B cell (primary cell): ENCODE measurements at regions of chr4 and their contacts with region 1.

Region 1: GRCh38 chr4:100093091-100093866 is 97.0 kb downstream of the DDIT4L start:
- DNase-seq: peak; percentile 93
- ATAC-seq: peak; percentile 99
- H3K4me3 ChIP-seq: no peak overlapping the region
- H3K4me3 Mint-ChIP-seq: peak overlapping the region; percentile 48
- H3K27ac ChIP-seq: no peak overlapping the region
- H3K27ac Mint-ChIP-seq: peak overlapping the region; percentile 57
- H3K4me1 ChIP-seq: peaks cover 7 to 12% of the 10 kb centered on the region in 2 donors
- H3K4me1 Mint-ChIP-seq: peaks cover 26% of the 10 kb centered on the region
- H3K27me3 ChIP-seq: no peaks in the 10 kb centered on the region
- H3K27me3 Mint-ChIP-seq: peaks cover 5% of the 10 kb centered on the region
- CTCF ChIP-seq: peak; percentile 84

Region 2: DNA sequence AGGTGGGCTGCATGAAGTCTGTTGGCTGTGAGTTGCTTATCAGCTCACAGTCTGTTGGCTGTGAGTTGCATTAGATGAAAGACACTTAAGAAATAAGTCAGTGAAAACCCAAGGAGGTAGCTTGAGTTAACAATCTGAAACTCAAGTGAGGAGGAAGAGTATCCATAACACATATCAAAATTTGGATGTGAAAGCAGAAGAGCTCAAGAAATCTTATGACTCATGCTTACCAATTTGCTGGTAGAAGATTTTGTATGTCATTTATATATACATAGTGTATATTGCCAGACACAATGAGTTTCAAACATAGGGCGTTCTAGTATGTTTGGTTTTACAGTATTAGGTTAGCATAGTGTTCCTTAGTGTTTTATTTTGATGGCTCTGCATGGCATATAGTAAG is 10.4 kb before region 1 on chr4:
- CTCF ChIA-PET with region 1: interaction called, 15 read pairs
- POLR2A ChIA-PET with region 1: no interaction called
- intact Hi-C with region 1: no loop called
- DNase-seq: no peak
- ATAC-seq: no peak
- H3K4me3 ChIP-seq: no peak overlapping the region
- H3K4me3 Mint-ChIP-seq: no peak overlapping the region
- H3K27ac ChIP-seq: no peak overlapping the region
- H3K27ac Mint-ChIP-seq: no peak overlapping the region
- H3K4me1 ChIP-seq: no peaks in the 10 kb centered on the region
- H3K4me1 Mint-ChIP-seq: no peaks in the 10 kb centered on the region
- H3K27me3 ChIP-seq: peaks cover 0 to 3% (median 0%) of the 10 kb centered on the region in 4 experiments
- H3K27me3 Mint-ChIP-seq: no peaks in the 10 kb centered on the region
- CTCF ChIP-seq: no peak

Region 3: GRCh38 chr4:100421361-100421978 is 328.2 kb after region 1 on chr4:
- CTCF ChIA-PET with region 1: no interaction called
- POLR2A ChIA-PET with region 1: no interaction called
- intact Hi-C with region 1: loop called (anchors 5 kb)
- DNase-seq: peak; percentile 3
- ATAC-seq: no peak
- H3K4me3 ChIP-seq: no peak overlapping the region
- H3K4me3 Mint-ChIP-seq: no peak overlapping the region
- H3K27ac ChIP-seq: no peak overlapping the region
- H3K27ac Mint-ChIP-seq: no peak overlapping the region
- H3K4me1 ChIP-seq: no peaks in the 10 kb centered on the region
- H3K4me1 Mint-ChIP-seq: no peaks in the 10 kb centered on the region
- H3K27me3 ChIP-seq: no peaks in the 10 kb centered on the region
- H3K27me3 Mint-ChIP-seq: peaks cover 7% of the 10 kb centered on the region
- CTCF ChIP-seq: peak; percentile 39

Region 4: GRCh38 chr4:100907465-100908454 is 814.5 kb after region 1 on chr4:
- CTCF ChIA-PET with region 1: no interaction called
- POLR2A ChIA-PET with region 1: no interaction called
- intact Hi-C with region 1: loop called (anchors 10 kb)
- DNase-seq: no peak
- ATAC-seq: no peak
- H3K4me3 ChIP-seq: no peak overlapping the region
- H3K4me3 Mint-ChIP-seq: no peak overlapping the region
- H3K27ac ChIP-seq: no peak overlapping the region
- H3K27ac Mint-ChIP-seq: no peak overlapping the region
- H3K4me1 ChIP-seq: no peaks in the 10 kb centered on the region
- H3K4me1 Mint-ChIP-seq: no peaks in the 10 kb centered on the region
- H3K27me3 ChIP-seq: no peaks in the 10 kb centered on the region
- H3K27me3 Mint-ChIP-seq: no peaks in the 10 kb centered on the region
- CTCF ChIP-seq: peak; percentile 37

Region 5: GRCh38 chr4:101081695-101082369 is 988.6 kb after region 1 on chr4:
- CTCF ChIA-PET with region 1: interaction called, 3 read pairs
- POLR2A ChIA-PET with region 1: no interaction called
- intact Hi-C with region 1: loop called (anchors 5 kb)
- DNase-seq: no peak
- ATAC-seq: no peak
- H3K4me3 ChIP-seq: no peak overlapping the region
- H3K4me3 Mint-ChIP-seq: no peak overlapping the region
- H3K27ac ChIP-seq: peak overlapping the region in 1 of 2 donors; percentile 13
- H3K27ac Mint-ChIP-seq: no peak overlapping the region
- H3K4me1 ChIP-seq: peaks cover 22 to 30% of the 10 kb centered on the region in 2 donors
- H3K4me1 Mint-ChIP-seq: peaks cover 43% of the 10 kb centered on the region
- H3K27me3 ChIP-seq: no peaks in the 10 kb centered on the region
- H3K27me3 Mint-ChIP-seq: no peaks in the 10 kb centered on the region
- CTCF ChIP-seq: no peak